SK-N-SH (cell line): ENCODE measurements at regions of chr1 and their contacts with region 1.

Region 1: DNA sequence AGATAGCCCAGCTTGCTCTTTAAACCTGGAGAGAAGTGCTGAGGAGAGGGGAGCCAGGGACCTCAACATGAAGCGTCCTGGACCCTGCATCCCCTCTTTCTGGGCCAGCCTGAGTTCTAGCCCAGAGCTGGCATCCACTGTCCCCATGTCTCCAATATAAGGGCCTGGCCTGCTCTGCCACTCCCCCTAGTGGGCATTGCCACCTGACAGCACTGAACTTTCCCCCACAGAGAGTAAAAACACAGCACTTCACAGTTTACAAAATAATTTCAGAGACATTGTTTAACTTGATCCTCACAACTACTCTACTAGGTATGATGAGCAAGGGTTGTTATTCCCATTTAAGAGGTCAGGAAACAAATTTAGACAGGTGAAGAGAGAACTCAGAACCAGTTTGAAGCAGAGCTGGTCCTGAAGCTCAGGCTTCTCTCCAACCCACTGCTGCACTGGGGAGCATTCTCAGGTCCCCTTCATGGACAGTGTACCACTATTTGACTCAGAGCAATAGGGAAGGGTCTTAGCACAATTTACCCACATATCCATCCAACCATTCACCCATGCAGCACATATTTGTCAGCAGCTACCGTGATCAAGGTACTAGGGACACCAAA is 151.2 kb downstream of the DMRTA2 start:
- DNase-seq: peak; percentile 65
- H3K4me3 ChIP-seq: no peak overlapping the region; a peak in 1 of 4 replicates
- H3K27ac ChIP-seq: peak overlapping the region in 1 of 2 experiments; percentile 100; a peak in 3 of 4 replicates
- H3K4me1 ChIP-seq: peaks cover 0 to 64% of the 10 kb centered on the region in 2 experiments; a peak in 2 of 4 replicates
- H3K27me3 ChIP-seq: no peaks in the 10 kb centered on the region
- CTCF ChIP-seq: peak; percentile 73
- EP300 ChIP-seq: no peak
- RAD21 ChIP-seq: peak; percentile 82

Region 2: DNA sequence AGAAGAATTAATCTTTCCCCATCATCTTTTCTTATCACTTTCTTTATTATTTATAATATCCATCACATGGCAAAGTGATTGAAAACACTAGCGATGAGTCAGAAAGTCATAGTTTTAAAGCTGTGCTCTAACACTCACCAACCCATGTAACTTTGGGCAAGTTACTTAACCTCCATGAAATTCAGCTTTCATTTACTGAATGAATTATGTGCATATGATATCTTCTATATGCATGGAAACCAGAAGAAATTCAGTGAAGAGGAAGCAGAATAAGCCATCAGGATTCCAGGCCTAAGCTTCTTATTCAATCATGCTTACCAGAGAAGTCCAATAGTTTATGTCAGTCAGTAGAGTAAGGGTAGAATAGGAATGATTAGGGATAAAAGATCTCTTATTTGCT is 548.4 kb before region 1 on chr1:
- CTCF ChIA-PET with region 1: no interaction called
- POLR2A ChIA-PET with region 1: no interaction called
- DNase-seq: no peak
- H3K4me3 ChIP-seq: no peak overlapping the region
- H3K27ac ChIP-seq: no peak overlapping the region
- H3K4me1 ChIP-seq: no peaks in the 10 kb centered on the region
- H3K27me3 ChIP-seq: no peaks in the 10 kb centered on the region
- CTCF ChIP-seq: no peak
- EP300 ChIP-seq: no peak
- RAD21 ChIP-seq: no peak

Region 3: DNA sequence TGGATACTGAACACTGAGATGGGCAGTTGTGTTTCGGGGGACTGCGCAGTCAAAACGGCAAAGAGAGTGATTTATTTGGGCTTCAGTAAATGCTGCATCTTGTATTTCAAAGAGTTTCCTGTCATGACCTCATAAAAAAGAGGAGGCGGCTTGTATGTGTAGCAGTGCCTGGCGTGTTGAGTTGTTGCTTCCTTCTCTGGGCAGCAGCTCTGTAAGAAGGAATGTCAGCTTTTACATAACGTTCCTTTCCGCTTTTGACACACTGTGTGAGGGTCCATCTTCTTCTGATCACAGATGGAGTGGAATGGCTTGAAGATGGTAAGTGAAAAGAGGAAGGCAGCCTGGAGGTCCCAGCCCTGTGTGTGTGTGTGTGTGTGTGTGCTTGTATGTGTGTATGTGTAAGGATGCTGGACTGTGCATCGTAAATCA is 162.4 kb before region 1 on chr1:
- CTCF ChIA-PET with region 1: interaction called, 117 read pairs
- POLR2A ChIA-PET with region 1: interaction called, 87 read pairs
- DNase-seq: no peak
- H3K4me3 ChIP-seq: peak overlapping the region; percentile 39 to 59
- H3K27ac ChIP-seq: peak overlapping the region in 1 of 2 experiments; percentile 92; a peak in 2 of 4 replicates
- H3K4me1 ChIP-seq: no peaks in the 10 kb centered on the region; a peak in 2 of 4 replicates
- H3K27me3 ChIP-seq: peaks cover 5% of the 10 kb centered on the region; the same call in 1 of the 2 replicates
- CTCF ChIP-seq: no peak
- EP300 ChIP-seq: no peak
- RAD21 ChIP-seq: no peak

Region 4: GRCh38 chr1:50183378-50184133 is 88.5 kb before region 1 on chr1:
- CTCF ChIA-PET with region 1: interaction called, 12 read pairs
- POLR2A ChIA-PET with region 1: interaction called, 3 read pairs
- DNase-seq: peak; percentile 48
- H3K4me3 ChIP-seq: no peak overlapping the region
- H3K27ac ChIP-seq: peak overlapping the region in 1 of 2 experiments; percentile 77; a peak in 2 of 4 replicates
- H3K4me1 ChIP-seq: peaks cover 0 to 27% of the 10 kb centered on the region in 2 experiments; a peak in 2 of 4 replicates
- H3K27me3 ChIP-seq: no peaks in the 10 kb centered on the region
- CTCF ChIP-seq: no peak
- EP300 ChIP-seq: no peak
- RAD21 ChIP-seq: peak; percentile 36; the same call in 1 of the 2 replicates

Region 5: GRCh38 chr1:50308878-50309277 is 36.8 kb after region 1 on chr1:
- CTCF ChIA-PET with region 1: interaction called, 22 read pairs
- POLR2A ChIA-PET with region 1: interaction called, 10 read pairs
- DNase-seq: peak; percentile 47
- H3K4me3 ChIP-seq: no peak overlapping the region
- H3K27ac ChIP-seq: peak overlapping the region in 1 of 2 experiments; percentile 96; a peak in 2 of 4 replicates
- H3K4me1 ChIP-seq: peaks cover 0 to 32% of the 10 kb centered on the region in 2 experiments; a peak in 2 of 4 replicates
- H3K27me3 ChIP-seq: no peaks in the 10 kb centered on the region
- CTCF ChIP-seq: no peak
- EP300 ChIP-seq: peak in 1 of 2 experiments; percentile 86; a peak in 2 of 4 replicates
- RAD21 ChIP-seq: no peak

Region 6: GRCh38 chr1:50343323-50343722 is 71.2 kb after region 1 on chr1:
- CTCF ChIA-PET with region 1: interaction called, 38 read pairs
- POLR2A ChIA-PET with region 1: interaction called, 15 read pairs
- DNase-seq: no peak
- H3K4me3 ChIP-seq: no peak overlapping the region
- H3K27ac ChIP-seq: peak overlapping the region in 1 of 2 experiments; percentile 97; a peak in 2 of 4 replicates
- H3K4me1 ChIP-seq: peaks cover 0 to 49% of the 10 kb centered on the region in 2 experiments; a peak in 2 of 4 replicates
- H3K27me3 ChIP-seq: no peaks in the 10 kb centered on the region
- CTCF ChIP-seq: no peak
- EP300 ChIP-seq: no peak
- RAD21 ChIP-seq: no peak

Region 7: GRCh38 chr1:50371749-50372148 is 99.7 kb after region 1 on chr1:
- CTCF ChIA-PET with region 1: no interaction called
- POLR2A ChIA-PET with region 1: no interaction called
- DNase-seq: no peak
- H3K4me3 ChIP-seq: no peak overlapping the region
- H3K27ac ChIP-seq: no peak overlapping the region
- H3K4me1 ChIP-seq: no peaks in the 10 kb centered on the region; a peak in 1 of 4 replicates
- H3K27me3 ChIP-seq: no peaks in the 10 kb centered on the region
- CTCF ChIP-seq: no peak
- EP300 ChIP-seq: no peak
- RAD21 ChIP-seq: no peak

Region 8: DNA sequence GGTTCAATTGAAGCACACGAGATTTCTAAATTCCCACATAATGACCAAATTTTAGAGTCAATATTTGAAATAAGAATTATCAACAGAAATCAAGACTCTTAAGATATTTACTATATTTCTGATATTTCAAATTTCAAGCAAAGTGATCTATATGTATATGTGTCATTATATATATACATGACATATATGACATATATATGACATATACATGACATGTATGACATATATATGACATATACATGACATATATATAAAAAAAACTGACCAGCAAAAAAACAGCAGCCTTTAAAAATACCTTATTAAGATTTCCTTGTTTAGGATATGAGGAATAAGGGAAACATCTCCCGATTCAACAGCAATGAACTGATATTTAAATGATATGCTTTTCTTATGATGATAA is 421.8 kb after region 1 on chr1:
- CTCF ChIA-PET with region 1: no interaction called
- POLR2A ChIA-PET with region 1: no interaction called
- DNase-seq: no peak
- H3K4me3 ChIP-seq: no peak overlapping the region
- H3K27ac ChIP-seq: no peak overlapping the region
- H3K4me1 ChIP-seq: no peaks in the 10 kb centered on the region; a peak in 1 of 4 replicates
- H3K27me3 ChIP-seq: no peaks in the 10 kb centered on the region
- CTCF ChIP-seq: no peak
- EP300 ChIP-seq: no peak
- RAD21 ChIP-seq: no peak